ENCODE measurements at regions of chr1 and their contacts with region 1.

Region 1: DNA sequence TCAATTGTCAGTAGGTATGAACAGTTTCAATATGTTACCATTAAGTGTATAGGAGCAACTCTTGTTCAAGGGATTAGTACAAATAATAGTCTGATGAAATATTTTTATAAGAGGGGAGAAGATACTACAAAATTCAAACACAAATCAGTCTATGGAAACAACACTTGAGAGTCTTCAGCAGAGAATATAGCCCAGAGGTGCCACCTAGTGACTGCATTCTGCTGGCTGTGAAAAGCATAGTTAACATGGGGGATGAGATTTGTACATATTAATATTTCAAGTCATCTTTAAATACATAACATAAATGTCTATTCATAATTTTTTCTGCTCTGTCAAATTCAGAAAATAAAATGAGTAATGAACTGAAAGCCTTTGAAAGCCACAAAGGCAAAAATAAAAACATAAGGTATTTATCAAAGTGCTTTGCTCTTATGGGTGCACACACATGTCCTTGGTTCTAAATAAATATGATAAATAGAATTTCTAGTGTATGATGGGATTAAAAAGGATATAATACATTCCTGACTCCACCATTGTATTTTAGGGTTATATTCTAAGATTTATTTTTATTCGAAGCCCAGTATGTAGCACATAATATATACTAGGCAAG is 440.9 kb upstream of the ZRANB2 start:
- DNase-seq: peak; percentile 2 to 80 (median 56)

Region 2: GRCh38 chr1:71196685-71197084 is 325.1 kb before region 1 on chr1:
- intact Hi-C with region 1: loop called (anchors 10 kb)
- DNase-seq: peak in 1 of 42 donors; percentile 38

Region 3: GRCh38 chr1:71371581-71371980 is 150.2 kb before region 1 on chr1:
- intact Hi-C with region 1: no loop called
- DNase-seq: no peak